ENCODE measurements at regions of chr2 and their contacts with region 1.

Region 1: GRCh38 chr2:24792874-24793760 is at the starts of genes CENPO and PTRHD1:
- DNase-seq: peak; percentile 92
- ATAC-seq: peak; percentile 97
- H3K4me3 ChIP-seq: peak within 1 kb of the TSS; percentile 97
- H3K27ac ChIP-seq: peak within 1 kb of the TSS; percentile 98
- H3K4me1 ChIP-seq: peaks cover 6% of the 10 kb centered on the region
- H3K27me3 ChIP-seq: no peaks in the 10 kb centered on the region
- CTCF ChIP-seq: peak; percentile 36 to 40 (median 37); a peak in 5 of 6 replicates
- EP300 ChIP-seq: no peak
- POLR2A ChIP-seq: peak; percentile 93
- RAD21 ChIP-seq: no peak
- polyA plus RNA-seq, gene CENPO: 18.7 to 23.1 TPM
- polyA plus RNA-seq, gene PTRHD1: 30.6 to 43.9 TPM

Region 2: GRCh38 chr2:24721470-24721869 is 71.6 kb before region 1 on chr2:
- CTCF ChIA-PET with region 1: interaction called, 3 read pairs
- POLR2A ChIA-PET with region 1: interaction called, 6 read pairs
- RAD21 ChIA-PET with region 1: interaction called, 16 read pairs
- SMC1A ChIA-PET with region 1: interaction called, 3 read pairs
- in situ Hi-C with region 1: no loop called
- intact Hi-C with region 1: no loop called
- DNase-seq: peak; percentile 45
- ATAC-seq: peak; percentile 77
- H3K4me3 ChIP-seq: no peak overlapping the region
- H3K27ac ChIP-seq: peak overlapping the region; percentile 36; the same call in 1 of the 2 replicates
- H3K4me1 ChIP-seq: peaks cover 16% of the 10 kb centered on the region; the same call in 1 of the 2 replicates
- H3K27me3 ChIP-seq: no peaks in the 10 kb centered on the region
- CTCF ChIP-seq: no peak
- EP300 ChIP-seq: no peak
- POLR2A ChIP-seq: no peak
- RAD21 ChIP-seq: no peak

Region 3: DNA sequence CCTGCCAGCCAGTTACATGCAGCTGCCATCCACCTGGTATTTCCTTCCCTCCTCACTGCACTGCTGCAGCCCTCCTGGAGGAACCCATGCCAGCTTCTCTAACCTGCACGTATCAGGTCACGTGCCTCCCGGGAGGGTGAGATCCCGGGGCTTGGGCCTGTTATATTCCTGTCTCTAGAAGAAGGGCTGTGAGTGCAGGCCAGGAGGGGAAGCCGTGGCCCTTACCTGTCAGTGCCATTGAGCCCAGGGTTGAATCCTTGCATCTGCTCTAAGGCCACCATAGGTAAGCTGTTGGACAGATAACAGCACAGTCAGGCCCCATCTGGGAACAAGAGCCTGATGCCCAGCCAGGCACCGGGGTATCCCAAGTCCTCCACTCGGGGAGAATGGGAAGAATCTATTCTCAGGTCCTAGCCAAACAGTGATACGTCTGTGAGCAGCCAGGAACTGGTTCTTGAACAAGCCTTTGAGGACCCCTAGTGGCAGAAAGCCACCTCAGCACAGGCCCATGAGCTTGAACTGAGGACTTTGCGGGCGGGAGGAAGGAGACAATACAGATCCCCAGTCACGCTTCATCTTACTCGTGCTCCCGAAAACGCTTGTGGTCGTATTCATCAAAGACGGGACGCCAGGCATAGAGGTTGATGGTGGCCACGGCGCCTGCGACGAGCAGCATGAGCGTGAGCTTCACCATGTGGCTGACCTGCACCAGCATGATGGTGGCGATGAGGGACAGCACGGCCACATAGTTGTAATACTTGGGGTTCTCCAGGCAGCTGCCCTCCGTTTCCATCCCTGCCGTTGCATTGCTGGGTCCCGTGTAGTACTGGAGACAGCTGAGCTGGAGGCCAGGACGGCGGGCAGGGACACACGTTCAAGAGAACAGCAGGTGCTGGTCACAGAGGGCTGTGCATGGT is 34.5 kb after region 1 on chr2:
- CTCF ChIA-PET with region 1: interaction called, 18 read pairs
- POLR2A ChIA-PET with region 1: no interaction called
- RAD21 ChIA-PET with region 1: interaction called, 4 read pairs
- SMC1A ChIA-PET with region 1: interaction called, 3 read pairs
- in situ Hi-C with region 1: no loop called
- intact Hi-C with region 1: loop called (anchors 2 kb)
- DNase-seq: peak; percentile 24
- ATAC-seq: peak; percentile 96
- H3K4me3 ChIP-seq: no peak overlapping the region
- H3K27ac ChIP-seq: no peak overlapping the region
- H3K4me1 ChIP-seq: no peaks in the 10 kb centered on the region; the same call in 1 of the 2 replicates
- H3K27me3 ChIP-seq: no peaks in the 10 kb centered on the region
- CTCF ChIP-seq: peak; percentile 92 to 97 (median 92)
- EP300 ChIP-seq: no peak
- POLR2A ChIP-seq: peak; percentile 40; the same call in 1 of the 2 replicates
- RAD21 ChIP-seq: peak; percentile 95

Measured in GM12878 (cell line).